OCI-LY7 (cell line): ENCODE measurements at regions of chr22 and their contacts with region 1.

Region 1: GRCh38 chr22:45831394-45831793 is 145.6 kb downstream of the WNT7B start:
- DNase-seq: peak; percentile 31
- H3K4me3 ChIP-seq: no peak overlapping the region
- H3K27ac ChIP-seq: no peak overlapping the region
- H3K4me1 ChIP-seq: no peaks in the 10 kb centered on the region
- CTCF ChIP-seq: peak; percentile 81

Region 2: DNA sequence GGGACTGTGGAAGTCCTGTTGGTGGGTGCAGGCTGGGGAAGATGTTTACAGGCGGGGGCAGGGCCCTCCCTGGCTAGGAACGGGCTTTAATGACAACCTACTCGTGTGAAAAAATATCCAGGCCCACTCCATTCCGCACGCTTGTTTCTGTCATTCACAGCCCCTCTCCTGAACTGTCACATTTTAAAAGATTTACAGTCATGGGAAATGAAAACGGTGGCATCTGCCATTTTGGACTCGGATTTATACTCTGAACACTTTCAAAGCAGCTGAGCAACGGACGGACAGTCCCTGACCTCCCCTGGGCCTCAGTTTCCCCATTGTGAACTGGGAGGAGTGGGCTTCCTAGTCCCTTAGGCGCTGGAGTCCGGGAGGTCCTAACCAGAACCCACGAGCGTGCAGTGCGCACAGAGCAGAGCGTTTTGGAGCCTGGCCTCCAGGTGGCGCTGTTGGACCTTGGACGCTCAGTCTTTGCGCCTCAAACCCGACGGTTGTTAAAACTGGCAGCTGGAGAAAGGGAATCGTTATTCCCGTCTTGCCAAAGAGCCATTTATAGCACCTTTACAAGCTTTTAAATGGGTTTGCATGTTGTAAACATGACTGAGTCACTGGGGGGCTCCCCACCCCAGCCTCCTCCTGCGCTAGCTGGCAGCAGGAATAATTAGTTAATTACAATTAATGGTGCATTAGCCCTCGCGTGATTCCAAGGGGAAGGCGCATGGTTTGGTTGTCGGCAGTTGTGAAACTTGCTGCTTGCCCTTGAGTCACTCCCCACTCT is 253.5 kb before region 1 on chr22:
- CTCF ChIA-PET with region 1: no interaction called
- POLR2A ChIA-PET with region 1: no interaction called
- intact Hi-C with region 1: loop called (anchors 10 kb)
- DNase-seq: peak; percentile 82
- H3K4me3 ChIP-seq: no peak overlapping the region
- H3K27ac ChIP-seq: no peak overlapping the region
- H3K4me1 ChIP-seq: no peaks in the 10 kb centered on the region
- CTCF ChIP-seq: peak; percentile 96

Region 3: GRCh38 chr22:45645526-45646414 is 185.6 kb before region 1 on chr22:
- CTCF ChIA-PET with region 1: no interaction called
- POLR2A ChIA-PET with region 1: interaction called, 3 read pairs
- intact Hi-C with region 1: loop called (anchors 1 kb)
- DNase-seq: peak; percentile 57
- H3K4me3 ChIP-seq: no peak overlapping the region
- H3K27ac ChIP-seq: no peak overlapping the region
- H3K4me1 ChIP-seq: no peaks in the 10 kb centered on the region
- CTCF ChIP-seq: peak; percentile 83

Region 4: GRCh38 chr22:45731798-45732495 is 99.4 kb before region 1 on chr22:
- CTCF ChIA-PET with region 1: no interaction called
- POLR2A ChIA-PET with region 1: interaction called, 3 read pairs
- intact Hi-C with region 1: loop called (anchors 2 kb)
- DNase-seq: peak; percentile 26
- H3K4me3 ChIP-seq: no peak overlapping the region
- H3K27ac ChIP-seq: no peak overlapping the region
- H3K4me1 ChIP-seq: no peaks in the 10 kb centered on the region
- CTCF ChIP-seq: peak; percentile 72

Region 5: GRCh38 chr22:45738206-45738605 is 93.2 kb before region 1 on chr22:
- CTCF ChIA-PET with region 1: no interaction called
- POLR2A ChIA-PET with region 1: no interaction called
- intact Hi-C with region 1: loop called (anchors 2 kb)
- DNase-seq: no peak
- H3K4me3 ChIP-seq: no peak overlapping the region
- H3K27ac ChIP-seq: no peak overlapping the region
- H3K4me1 ChIP-seq: no peaks in the 10 kb centered on the region
- CTCF ChIP-seq: no peak

Region 6: GRCh38 chr22:45863981-45864751 is 32.8 kb after region 1 on chr22:
- CTCF ChIA-PET with region 1: no interaction called
- POLR2A ChIA-PET with region 1: no interaction called
- intact Hi-C with region 1: no loop called
- DNase-seq: peak; percentile 72
- H3K4me3 ChIP-seq: no peak overlapping the region
- H3K27ac ChIP-seq: no peak overlapping the region
- H3K4me1 ChIP-seq: no peaks in the 10 kb centered on the region
- CTCF ChIP-seq: peak; percentile 93